ENCODE measurements at regions of chr6 and their contacts with region 1.

Region 1: GRCh38 chr6:34696739-34697543 is at the start of gene ILRUN:
- DNase-seq: peak; percentile 99
- H3K4me3 Mint-ChIP-seq: peak within 1 kb of the TSS; percentile 90
- H3K27ac Mint-ChIP-seq: peak within 1 kb of the TSS; percentile 95
- H3K4me1 Mint-ChIP-seq: peaks cover 35% of the 10 kb centered on the region
- H3K27me3 Mint-ChIP-seq: no peaks in the 10 kb centered on the region
- total RNA-seq, gene ILRUN: 65.4 and 67.2 TPM in 2 replicates

Region 2: GRCh38 chr6:34656378-34657036 is 40.4 kb before region 1 on chr6:
- intact Hi-C with region 1: loop called (anchors 1 kb)
- DNase-seq: peak; percentile 76
- H3K4me3 Mint-ChIP-seq: peak overlapping the region; percentile 78
- H3K27ac Mint-ChIP-seq: peak overlapping the region; percentile 90
- H3K4me1 Mint-ChIP-seq: peaks cover 36% of the 10 kb centered on the region
- H3K27me3 Mint-ChIP-seq: no peaks in the 10 kb centered on the region

Region 3: GRCh38 chr6:34671801-34672656 is 24.9 kb before region 1 on chr6:
- intact Hi-C with region 1: loop called (anchors 1 kb)
- DNase-seq: peak; percentile 93
- H3K4me3 Mint-ChIP-seq: peak overlapping the region; percentile 81
- H3K27ac Mint-ChIP-seq: peak overlapping the region; percentile 95
- H3K4me1 Mint-ChIP-seq: peaks cover 47% of the 10 kb centered on the region
- H3K27me3 Mint-ChIP-seq: no peaks in the 10 kb centered on the region

Region 4: GRCh38 chr6:34757687-34758274 is 60.8 kb after region 1 on chr6:
- intact Hi-C with region 1: loop called (anchors 1 kb)
- DNase-seq: no peak
- H3K4me3 Mint-ChIP-seq: no peak overlapping the region
- H3K27ac Mint-ChIP-seq: no peak overlapping the region
- H3K4me1 Mint-ChIP-seq: peaks cover 7% of the 10 kb centered on the region
- H3K27me3 Mint-ChIP-seq: no peaks in the 10 kb centered on the region

Measured in activated CD4-positive, alpha-beta T cell treated with anti-CD3 and anti-CD28 coated beads, Interleukin-2, amount 10 ng/mL, durations not matched to agents 24 days and 14 days (primary cell).